Calu3 (cell line): ENCODE measurements at regions of chr10 and their contacts with region 1.

Region 1: DNA sequence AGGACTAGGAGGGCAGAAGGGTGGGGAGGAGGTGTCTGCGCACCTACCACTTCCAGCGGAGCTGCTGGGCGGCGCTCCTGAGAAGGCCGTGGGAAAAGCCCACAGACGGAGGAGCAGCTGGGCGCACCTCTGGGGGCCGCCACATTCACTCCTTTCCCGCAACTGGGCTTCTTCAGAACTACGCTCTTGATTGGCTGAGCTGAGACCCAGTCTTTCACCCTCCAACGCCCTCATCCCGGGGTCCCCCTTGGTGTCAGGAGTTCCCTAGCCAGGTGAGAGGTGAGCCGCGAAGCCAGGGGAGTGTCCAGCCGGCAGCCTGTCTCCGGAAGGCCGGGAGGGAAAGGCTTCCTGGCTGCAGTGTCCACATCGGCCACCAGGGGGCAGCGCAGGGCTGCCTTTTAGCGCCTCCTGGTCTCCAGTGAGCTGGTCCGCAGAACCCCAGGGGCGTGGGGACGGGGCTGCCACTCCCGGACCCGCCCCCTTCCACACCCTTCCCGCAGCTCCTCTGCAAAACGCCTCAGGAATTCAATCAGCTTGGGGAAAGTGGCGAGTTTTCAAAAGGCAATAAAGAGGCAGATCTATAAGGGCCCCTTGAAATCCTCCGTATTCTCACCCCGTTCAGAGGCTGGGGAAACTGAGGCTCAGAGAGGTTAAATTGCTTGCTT is 98.8 kb downstream of the CHST15 start:
- DNase-seq: peak; percentile 92
- H3K4me3 Mint-ChIP-seq: peak overlapping the region; percentile 69
- H3K27ac Mint-ChIP-seq: peak overlapping the region; percentile 84
- H3K4me1 Mint-ChIP-seq: peaks cover 38% of the 10 kb centered on the region
- H3K27me3 Mint-ChIP-seq: no peaks in the 10 kb centered on the region
- CTCF ChIP-seq: peak; percentile 92

Region 2: GRCh38 chr10:124081682-124082081 is 87.1 kb after region 1 on chr10:
- CTCF ChIA-PET with region 1: no interaction called
- intact Hi-C with region 1: no loop called
- DNase-seq: no peak
- H3K4me3 Mint-ChIP-seq: no peak overlapping the region
- H3K27ac Mint-ChIP-seq: no peak overlapping the region
- H3K4me1 Mint-ChIP-seq: no peaks in the 10 kb centered on the region
- H3K27me3 Mint-ChIP-seq: no peaks in the 10 kb centered on the region
- CTCF ChIP-seq: no peak

Region 3: DNA sequence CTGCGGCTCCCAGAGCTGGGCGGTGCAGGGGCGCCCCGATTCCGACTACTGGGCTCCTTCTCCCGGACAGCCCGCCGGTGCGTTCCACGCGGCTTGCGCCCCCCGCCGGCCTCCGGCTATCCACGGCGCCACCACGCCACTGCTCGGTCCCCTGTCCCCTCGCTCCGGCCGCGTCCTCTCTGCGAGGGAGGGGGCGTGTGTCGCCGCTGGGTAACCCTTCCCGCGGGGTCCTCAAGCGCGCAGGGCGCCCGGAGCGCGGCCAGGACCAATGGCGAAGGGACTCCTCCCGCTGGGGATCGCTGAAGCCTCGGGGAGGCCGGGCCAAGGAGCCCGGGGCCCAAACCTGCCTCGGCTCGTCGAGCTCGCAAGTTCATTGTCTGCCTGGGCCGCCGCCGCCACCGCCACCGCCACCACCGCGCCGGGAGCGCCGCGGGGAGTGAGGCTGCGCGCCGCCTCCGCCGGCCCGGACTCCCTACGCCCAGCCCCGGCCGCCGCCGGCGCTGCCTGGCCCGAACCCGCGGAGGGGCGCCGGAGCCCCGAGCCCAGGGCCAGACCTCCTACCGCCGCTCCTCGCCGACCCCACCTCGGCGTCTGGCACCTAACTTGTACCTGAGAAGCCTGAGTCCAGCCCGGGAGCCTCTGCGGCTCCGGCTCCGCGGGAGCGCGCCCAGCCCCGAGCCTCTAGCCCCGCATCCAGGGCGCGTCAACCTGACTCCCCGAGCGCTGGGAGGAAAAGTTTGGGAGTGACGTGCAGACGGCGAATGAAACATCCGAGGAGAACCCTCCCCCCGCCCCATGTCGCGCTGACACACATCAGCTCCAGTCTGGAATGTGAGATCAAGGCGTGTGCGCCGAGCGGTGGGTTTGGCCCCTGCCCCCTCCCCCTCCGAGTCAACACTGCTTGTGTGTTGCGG is 98.6 kb after region 1 on chr10 and contains the start of gene CHST15:
- CTCF ChIA-PET with region 1: interaction called, 7 read pairs
- intact Hi-C with region 1: loop called (anchors 5 kb)
- DNase-seq: peak; percentile 46
- H3K4me3 Mint-ChIP-seq: peak within 1 kb of the TSS; percentile 76
- H3K27ac Mint-ChIP-seq: no peak within 1 kb of the TSS
- H3K4me1 Mint-ChIP-seq: peaks cover 27% of the 10 kb centered on the region
- H3K27me3 Mint-ChIP-seq: no peaks in the 10 kb centered on the region
- CTCF ChIP-seq: no peak
- total RNA-seq, gene CHST15: 18.3 and 19.3 TPM in 2 replicates

Region 4: GRCh38 chr10:124152916-124153826 is 158.6 kb after region 1 on chr10:
- CTCF ChIA-PET with region 1: interaction called, 5 read pairs
- intact Hi-C with region 1: loop called (anchors 2 kb)
- DNase-seq: peak; percentile 67
- H3K4me3 Mint-ChIP-seq: no peak overlapping the region
- H3K27ac Mint-ChIP-seq: no peak overlapping the region
- H3K4me1 Mint-ChIP-seq: peaks cover 18% of the 10 kb centered on the region
- H3K27me3 Mint-ChIP-seq: no peaks in the 10 kb centered on the region
- CTCF ChIP-seq: no peak

Region 5: GRCh38 chr10:124259139-124259825 is 264.7 kb after region 1 on chr10:
- CTCF ChIA-PET with region 1: no interaction called
- intact Hi-C with region 1: loop called (anchors 10 kb)
- DNase-seq: peak; percentile 17
- H3K4me3 Mint-ChIP-seq: no peak overlapping the region
- H3K27ac Mint-ChIP-seq: no peak overlapping the region
- H3K4me1 Mint-ChIP-seq: no peaks in the 10 kb centered on the region
- H3K27me3 Mint-ChIP-seq: peaks cover 15% of the 10 kb centered on the region
- CTCF ChIP-seq: no peak

Region 6: GRCh38 chr10:124388823-124389612 is 394.5 kb after region 1 on chr10:
- CTCF ChIA-PET with region 1: interaction called, 33 read pairs
- intact Hi-C with region 1: loop called (anchors 2 kb)
- DNase-seq: peak; percentile 89
- H3K4me3 Mint-ChIP-seq: no peak overlapping the region
- H3K27ac Mint-ChIP-seq: no peak overlapping the region
- H3K4me1 Mint-ChIP-seq: peaks cover 3% of the 10 kb centered on the region
- H3K27me3 Mint-ChIP-seq: no peaks in the 10 kb centered on the region
- CTCF ChIP-seq: peak; percentile 73

Region 7: DNA sequence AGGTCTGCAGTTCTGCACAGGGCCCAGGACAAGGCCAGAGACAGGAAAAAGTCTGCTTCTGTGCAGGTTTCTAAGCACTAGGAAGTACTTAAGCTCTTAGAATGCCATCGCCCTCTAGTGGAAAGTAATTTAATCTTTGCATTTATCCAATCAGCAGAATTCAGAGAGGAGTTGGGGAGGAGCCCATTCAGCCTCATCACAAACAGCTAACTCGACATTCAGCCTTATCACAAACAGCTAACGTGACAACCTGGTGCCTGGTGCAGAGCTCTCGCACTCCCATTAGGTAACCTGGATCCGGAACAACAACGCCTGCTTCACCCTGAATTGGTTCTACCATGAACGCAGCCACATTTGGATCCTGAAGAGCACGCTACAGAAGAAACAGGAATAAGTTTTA is 409.0 kb after region 1 on chr10:
- CTCF ChIA-PET with region 1: interaction called, 10 read pairs
- intact Hi-C with region 1: no loop called
- DNase-seq: no peak
- H3K4me3 Mint-ChIP-seq: no peak overlapping the region
- H3K27ac Mint-ChIP-seq: no peak overlapping the region
- H3K4me1 Mint-ChIP-seq: peaks cover 9% of the 10 kb centered on the region
- H3K27me3 Mint-ChIP-seq: no peaks in the 10 kb centered on the region
- CTCF ChIP-seq: peak; percentile 21